Breast epithelium (tissue), 4 donors: ENCODE measurements at regions of chr21 and their contacts with region 1.

Region 1: GRCh38 chr21:40143822-40144525 is 276.7 kb downstream of the PCP4 start:
- DNase-seq: peak; percentile 33 to 61
- H3K4me3 ChIP-seq: no peak overlapping the region
- H3K27ac ChIP-seq: no peak overlapping the region
- H3K4me1 ChIP-seq: no peaks in the 10 kb centered on the region
- H3K27me3 ChIP-seq: no peaks in the 10 kb centered on the region
- CTCF ChIP-seq: peak; percentile 54 to 72 (median 56)
- POLR2A ChIP-seq: no peak

Region 2: DNA sequence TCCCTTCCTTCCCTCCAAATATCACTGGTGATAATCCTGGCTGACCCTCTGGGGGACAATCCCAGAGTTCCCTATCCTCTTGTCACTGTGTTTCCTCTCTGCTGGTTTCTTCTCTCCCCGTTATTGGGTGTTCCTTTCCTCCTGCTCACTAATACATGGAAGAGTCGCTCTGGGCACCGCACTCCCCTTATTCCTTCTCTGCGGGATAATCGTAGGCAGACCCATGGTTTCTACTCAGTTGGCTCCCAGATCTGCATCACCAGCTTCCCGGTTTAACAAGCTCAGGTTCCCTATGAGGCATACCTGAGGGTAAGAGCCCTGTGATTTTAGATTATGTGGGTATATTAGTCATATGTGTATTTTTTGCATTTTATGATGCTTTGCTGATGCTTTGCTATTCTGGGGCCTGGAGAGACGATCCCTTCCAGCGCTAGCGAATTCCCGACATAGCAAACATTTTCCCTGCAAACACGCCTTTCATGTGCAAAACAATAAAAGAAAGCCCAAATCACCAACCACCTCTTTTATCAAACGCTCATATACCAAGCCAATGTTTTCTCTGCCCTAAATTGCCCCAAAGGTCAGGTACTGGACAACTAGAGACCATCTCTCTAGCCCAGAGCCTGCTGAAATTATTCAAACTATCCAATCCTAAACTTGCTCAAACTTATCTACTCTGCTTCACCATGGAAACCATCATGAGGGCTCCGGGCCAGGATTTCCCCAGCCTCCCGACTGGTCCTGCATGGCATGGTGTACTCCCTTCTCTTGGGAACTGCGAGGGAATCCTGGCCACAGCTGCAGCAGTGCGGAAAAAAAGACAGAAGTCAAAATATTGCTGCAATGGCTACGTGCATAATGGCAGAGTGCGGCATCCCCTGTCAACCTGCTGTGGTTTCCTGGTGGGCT is 192.5 kb before region 1 on chr21:
- intact Hi-C with region 1: loop called (anchors 5 kb)
- DNase-seq: no peak
- H3K4me3 ChIP-seq: no peak overlapping the region
- H3K27ac ChIP-seq: no peak overlapping the region
- H3K4me1 ChIP-seq: no peaks in the 10 kb centered on the region
- H3K27me3 ChIP-seq: peaks cover 0 to 4% of the 10 kb centered on the region in 2 donors
- CTCF ChIP-seq: no peak
- POLR2A ChIP-seq: no peak

Region 3: GRCh38 chr21:40176724-40177123 is 32.8 kb after region 1 on chr21:
- intact Hi-C with region 1: no loop called
- DNase-seq: no peak
- H3K4me3 ChIP-seq: no peak overlapping the region
- H3K27ac ChIP-seq: no peak overlapping the region
- H3K4me1 ChIP-seq: no peaks in the 10 kb centered on the region
- H3K27me3 ChIP-seq: peaks cover 0 to 5% of the 10 kb centered on the region in 2 donors
- CTCF ChIP-seq: no peak
- POLR2A ChIP-seq: no peak

Region 4: GRCh38 chr21:41068967-41069642 is 925.1 kb after region 1 on chr21:
- intact Hi-C with region 1: loop called (anchors 10 kb)
- DNase-seq: peak; percentile 73 to 75
- H3K4me3 ChIP-seq: peak overlapping the region in 1 of 3 donors; percentile 27
- H3K27ac ChIP-seq: no peak overlapping the region
- H3K4me1 ChIP-seq: no peaks in the 10 kb centered on the region
- H3K27me3 ChIP-seq: peaks cover 0 to 20% of the 10 kb centered on the region in 2 donors
- CTCF ChIP-seq: peak; percentile 40 to 78 (median 55)
- POLR2A ChIP-seq: no peak